GM12878 (cell line): ENCODE measurements at regions of chr2 and their contacts with region 1.

Region 1: GRCh38 chr2:62415019-62415431 is 91.0 kb downstream of the TMEM17 start:
- DNase-seq: peak; percentile 78
- ATAC-seq: peak; percentile 85
- H3K4me3 ChIP-seq: peak overlapping the region; percentile 37; the same call in 1 of the 2 replicates
- H3K27ac ChIP-seq: peak overlapping the region; percentile 70
- H3K4me1 ChIP-seq: peaks cover 39% of the 10 kb centered on the region
- H3K27me3 ChIP-seq: no peaks in the 10 kb centered on the region
- CTCF ChIP-seq: no peak
- EP300 ChIP-seq: peak in 1 of 2 experiments; percentile 35; a peak in 1 of 4 replicates
- POLR2A ChIP-seq: no peak
- RAD21 ChIP-seq: peak; percentile 3; the same call in 1 of the 2 replicates

Region 2: DNA sequence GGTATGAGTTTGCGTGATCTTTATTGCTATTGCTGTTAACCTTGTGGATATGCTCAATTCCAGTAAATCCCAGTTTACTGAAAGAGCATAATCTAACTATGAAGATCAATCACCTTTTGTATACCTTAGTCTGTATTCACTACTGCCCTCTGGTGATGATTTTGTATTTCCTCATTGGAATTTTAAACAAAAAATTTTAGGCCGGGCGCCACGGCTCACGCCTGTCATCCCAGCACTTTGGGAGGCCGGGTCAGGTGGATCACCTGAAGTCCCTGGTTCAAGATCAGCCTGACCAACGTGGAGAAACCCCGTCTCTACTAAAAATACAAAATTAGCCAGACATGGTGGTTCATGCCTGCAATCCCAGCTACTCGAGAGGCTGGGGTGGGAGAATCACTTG is 504.4 kb before region 1 on chr2:
- CTCF ChIA-PET with region 1: interaction called, 7 read pairs
- POLR2A ChIA-PET with region 1: no interaction called
- RAD21 ChIA-PET with region 1: interaction called, 6 read pairs
- SMC1A ChIA-PET with region 1: interaction called, 10 read pairs
- in situ Hi-C with region 1: loop called (anchors 5 kb)
- intact Hi-C with region 1: no loop called
- DNase-seq: no peak
- ATAC-seq: no peak
- H3K4me3 ChIP-seq: no peak overlapping the region
- H3K27ac ChIP-seq: no peak overlapping the region
- H3K4me1 ChIP-seq: no peaks in the 10 kb centered on the region
- H3K27me3 ChIP-seq: no peaks in the 10 kb centered on the region
- CTCF ChIP-seq: peak in 2 of 3 experiments; percentile 12 to 19; a peak in 2 of 6 replicates
- EP300 ChIP-seq: no peak
- POLR2A ChIP-seq: no peak
- RAD21 ChIP-seq: no peak

Region 3: GRCh38 chr2:61924895-61925663 is 489.9 kb before region 1 on chr2:
- CTCF ChIA-PET with region 1: interaction called, 71 read pairs
- POLR2A ChIA-PET with region 1: no interaction called
- RAD21 ChIA-PET with region 1: interaction called, 7 read pairs
- SMC1A ChIA-PET with region 1: interaction called, 5 read pairs
- in situ Hi-C with region 1: no loop called
- intact Hi-C with region 1: no loop called
- DNase-seq: no peak
- ATAC-seq: no peak
- H3K4me3 ChIP-seq: no peak overlapping the region
- H3K27ac ChIP-seq: no peak overlapping the region
- H3K4me1 ChIP-seq: no peaks in the 10 kb centered on the region
- H3K27me3 ChIP-seq: no peaks in the 10 kb centered on the region
- CTCF ChIP-seq: no peak
- EP300 ChIP-seq: no peak
- POLR2A ChIP-seq: no peak
- RAD21 ChIP-seq: no peak

Region 4: DNA sequence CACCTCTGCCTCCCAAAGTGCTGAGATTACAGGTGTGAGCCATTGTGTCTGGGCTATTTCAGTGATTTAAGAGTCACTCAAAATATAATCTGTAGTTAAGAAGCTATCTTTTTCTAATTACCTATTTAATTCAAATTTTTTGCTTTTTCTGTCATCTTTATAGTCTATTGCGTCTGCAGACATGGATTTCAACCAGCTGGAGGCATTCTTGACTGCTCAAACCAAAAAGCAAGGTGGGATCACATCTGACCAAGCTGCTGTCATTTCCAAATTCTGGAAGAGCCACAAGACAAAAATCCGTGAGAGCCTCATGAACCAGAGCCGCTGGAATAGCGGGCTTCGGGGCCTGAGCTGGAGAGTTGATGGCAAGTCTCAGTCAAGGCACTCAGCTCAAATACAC is 414.5 kb before region 1 on chr2:
- CTCF ChIA-PET with region 1: interaction called, 195 read pairs
- POLR2A ChIA-PET with region 1: interaction called, 11 read pairs
- RAD21 ChIA-PET with region 1: interaction called, 141 read pairs
- SMC1A ChIA-PET with region 1: interaction called, 189 read pairs
- in situ Hi-C with region 1: no loop called
- intact Hi-C with region 1: no loop called
- DNase-seq: no peak
- ATAC-seq: no peak
- H3K4me3 ChIP-seq: no peak overlapping the region
- H3K27ac ChIP-seq: no peak overlapping the region
- H3K4me1 ChIP-seq: peaks cover 10% of the 10 kb centered on the region; the same call in 1 of the 2 replicates
- H3K27me3 ChIP-seq: no peaks in the 10 kb centered on the region
- CTCF ChIP-seq: no peak
- EP300 ChIP-seq: no peak
- POLR2A ChIP-seq: no peak
- RAD21 ChIP-seq: peak; percentile 25; the same call in 1 of the 2 replicates

Region 5: DNA sequence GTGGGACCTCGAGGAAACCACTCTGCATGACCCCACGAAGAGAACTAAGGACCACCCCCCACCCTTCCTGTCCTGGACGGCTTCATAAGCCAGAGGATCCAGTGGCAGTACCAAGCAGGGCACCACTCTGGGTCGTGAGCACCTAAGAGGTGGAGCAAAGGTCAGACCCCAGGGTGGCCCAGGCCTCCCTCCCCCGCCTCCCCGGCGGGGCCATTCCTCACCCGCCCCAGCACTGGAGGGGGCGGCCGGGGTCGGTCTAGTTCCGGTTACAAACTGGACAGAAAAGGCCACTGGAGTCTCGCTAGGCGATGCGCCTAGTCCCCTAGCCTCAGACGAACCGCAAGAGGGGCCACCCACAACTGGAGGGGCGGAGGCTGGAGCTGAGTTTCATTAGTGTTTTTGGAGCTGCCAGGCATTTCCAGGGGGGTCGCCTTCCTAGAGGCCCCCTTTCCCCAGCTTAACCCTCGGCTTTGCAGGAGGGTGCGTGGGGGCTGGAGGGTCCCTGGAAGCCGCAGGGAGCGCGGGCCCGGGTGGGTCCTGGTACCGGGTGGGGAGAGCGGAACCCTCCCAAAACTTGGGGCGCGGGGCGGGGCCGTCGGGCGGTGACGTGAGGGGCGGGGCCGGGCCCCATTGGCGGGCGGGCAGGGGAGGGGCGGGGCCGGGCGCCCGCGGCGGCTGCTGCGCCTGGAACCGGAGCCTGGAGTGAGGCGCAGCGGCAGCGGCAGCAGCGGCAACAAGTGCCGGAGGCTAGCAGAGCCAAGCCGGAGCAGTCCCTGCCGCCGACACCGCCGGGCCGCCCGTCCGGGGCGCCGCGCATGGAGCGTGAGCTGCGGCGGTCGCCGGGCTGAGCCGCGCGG is 219.4 kb before region 1 on chr2 and contains the start of gene B3GNT2:
- CTCF ChIA-PET with region 1: interaction called, 6 read pairs
- POLR2A ChIA-PET with region 1: interaction called, 4 read pairs
- RAD21 ChIA-PET with region 1: interaction called, 16 read pairs
- SMC1A ChIA-PET with region 1: interaction called, 20 read pairs
- in situ Hi-C with region 1: loop called (anchors 10 kb)
- intact Hi-C with region 1: loop called (anchors 2 kb)
- DNase-seq: no peak
- ATAC-seq: peak; percentile 63
- H3K4me3 ChIP-seq: peak within 1 kb of the TSS; percentile 86
- H3K27ac ChIP-seq: peak within 1 kb of the TSS; percentile 87
- H3K4me1 ChIP-seq: peaks cover 9% of the 10 kb centered on the region
- H3K27me3 ChIP-seq: no peaks in the 10 kb centered on the region
- CTCF ChIP-seq: no peak
- EP300 ChIP-seq: no peak
- POLR2A ChIP-seq: peak; percentile 91
- RAD21 ChIP-seq: no peak
- polyA plus RNA-seq, gene B3GNT2: 19.7 to 36.5 TPM

Region 6: GRCh38 chr2:62340994-62341484 is 74.0 kb before region 1 on chr2:
- CTCF ChIA-PET with region 1: no interaction called
- POLR2A ChIA-PET with region 1: interaction called, 3 read pairs
- RAD21 ChIA-PET with region 1: interaction called, 3 read pairs
- SMC1A ChIA-PET with region 1: interaction called, 7 read pairs
- in situ Hi-C with region 1: no loop called
- intact Hi-C with region 1: loop called (anchors 1 kb)
- DNase-seq: peak; percentile 85
- ATAC-seq: peak; percentile 84
- H3K4me3 ChIP-seq: no peak overlapping the region
- H3K27ac ChIP-seq: peak overlapping the region; percentile 77
- H3K4me1 ChIP-seq: peaks cover 50% of the 10 kb centered on the region
- H3K27me3 ChIP-seq: no peaks in the 10 kb centered on the region
- CTCF ChIP-seq: no peak
- EP300 ChIP-seq: peak; percentile 15 to 43; a peak in 2 of 4 replicates
- POLR2A ChIP-seq: no peak; the same call in 1 of the 2 replicates
- RAD21 ChIP-seq: 0 out of 2 replicates have a peak, but pooled peaks have one; percentile 14

Region 7: GRCh38 chr2:62443886-62444285 is 28.9 kb after region 1 on chr2:
- CTCF ChIA-PET with region 1: interaction called, 3 read pairs
- POLR2A ChIA-PET with region 1: no interaction called
- RAD21 ChIA-PET with region 1: interaction called, 12 read pairs
- SMC1A ChIA-PET with region 1: interaction called, 5 read pairs
- in situ Hi-C with region 1: no loop called
- intact Hi-C with region 1: no loop called
- DNase-seq: no peak
- ATAC-seq: peak; percentile 59; the same call in 2 of the 3 replicates
- H3K4me3 ChIP-seq: no peak overlapping the region
- H3K27ac ChIP-seq: no peak overlapping the region
- H3K4me1 ChIP-seq: peaks cover 13% of the 10 kb centered on the region
- H3K27me3 ChIP-seq: no peaks in the 10 kb centered on the region
- CTCF ChIP-seq: 0 out of 6 replicates have a peak, but pooled peaks of 1 of the 3 experiments have one; percentile 10
- EP300 ChIP-seq: no peak
- POLR2A ChIP-seq: no peak
- RAD21 ChIP-seq: peak; percentile 33; the same call in 1 of the 2 replicates